Right ventricle myocardium inferior (tissue), 1 donor: ENCODE measurements at regions of chr16 and their contacts with region 1.

Region 1: GRCh38 chr16:53282975-53283946 is 151.0 kb upstream of the RBL2 start:
- DNase-seq: no peak
- ATAC-seq: no peak

Region 2: DNA sequence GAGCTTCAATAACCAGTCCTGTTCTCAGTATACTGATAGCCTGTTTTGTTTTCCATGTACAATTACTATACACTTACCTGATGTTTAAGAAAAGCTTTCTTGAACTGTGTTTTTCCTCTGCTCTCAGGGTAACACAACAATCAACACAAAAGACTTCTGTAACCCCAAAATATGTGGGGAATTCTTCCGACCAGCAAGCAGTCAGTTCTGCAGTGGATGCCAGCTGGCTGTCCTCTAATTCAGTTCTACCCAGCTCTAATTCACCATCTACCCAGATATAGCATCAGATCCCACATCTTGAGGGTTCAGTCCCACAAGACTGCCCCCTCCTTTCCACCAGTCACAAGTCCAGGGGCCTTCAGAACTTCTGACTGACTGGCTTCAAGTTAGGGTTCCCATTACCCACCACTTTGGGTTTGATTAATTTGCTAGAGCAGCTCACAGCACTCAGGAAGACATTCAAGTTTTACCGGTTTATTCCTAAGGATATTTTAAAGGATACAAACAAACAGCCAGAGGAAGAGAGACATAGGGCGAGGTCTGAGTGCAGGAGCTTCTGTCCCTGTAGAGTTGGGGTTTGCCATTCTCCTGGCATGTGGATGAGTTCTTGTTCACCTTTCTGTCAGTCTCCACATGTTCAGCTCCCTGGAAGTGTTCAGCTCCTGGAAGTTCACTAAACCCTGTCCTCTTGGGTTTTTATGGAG is 50.3 kb before region 1 on chr16:
- intact Hi-C with region 1: loop called (anchors 5 kb)
- DNase-seq: no peak
- ATAC-seq: no peak

Region 3: GRCh38 chr16:53632526-53632925 is 349.3 kb after region 1 on chr16:
- intact Hi-C with region 1: no loop called
- DNase-seq: no peak
- ATAC-seq: no peak